ENCODE measurements at regions of chr1 and their contacts with region 1.

Region 1: GRCh38 chr1:45303582-45304310 is 22.9 kb upstream of the HPDL start:
- DNase-seq: peak; percentile 97 to 99 (median 99)
- ATAC-seq: peak; percentile 92 to 95 (median 94)
- H3K4me3 ChIP-seq: peak overlapping the region; percentile 45 to 72 (median 69)
- H3K27ac ChIP-seq: peak overlapping the region; percentile 74 to 92 (median 90)
- H3K4me1 ChIP-seq: peaks cover 4 to 5% (median 4%) of the 10 kb centered on the region in 3 donors
- H3K27me3 ChIP-seq: no peaks in the 10 kb centered on the region
- CTCF ChIP-seq: peak; percentile 25 to 52 (median 44)

Region 2: GRCh38 chr1:44799770-44800584 is 503.8 kb before region 1 on chr1 and contains the start of gene PLK3:
- intact Hi-C with region 1: loop called in 1 of 3 experiments (anchors 10 kb)
- DNase-seq: peak; percentile 96 to 99 (median 99)
- ATAC-seq: peak; percentile 91 to 96 (median 94)
- H3K4me3 ChIP-seq: peak within 1 kb of the TSS; percentile 67 to 93 (median 80)
- H3K27ac ChIP-seq: peak within 1 kb of the TSS; percentile 87 to 95 (median 92)
- H3K4me1 ChIP-seq: peaks cover 0 to 15% (median 3%) of the 10 kb centered on the region in 3 donors
- H3K27me3 ChIP-seq: no peaks in the 10 kb centered on the region
- CTCF ChIP-seq: peak; percentile 76 to 93 (median 84)
- total RNA-seq, gene PLK3: 6.1 to 15.9 (median 9.7) TPM